ENCODE measurements at regions of chr17 and their contacts with region 1.

Region 1: GRCh38 chr17:42138749-42139492 is 15.9 kb downstream of the RAB5C start:
- DNase-seq: no peak
- H3K4me3 ChIP-seq: no peak overlapping the region
- H3K27ac ChIP-seq: no peak overlapping the region
- H3K4me1 ChIP-seq: peaks cover 0 to 5% (median 0%) of the 10 kb centered on the region in 4 experiments; a peak in 2 of 7 replicates
- H3K27me3 ChIP-seq: no peaks in the 10 kb centered on the region
- CTCF ChIP-seq: no peak
- EP300 ChIP-seq: no peak
- POLR2A ChIP-seq: no peak
- RAD21 ChIP-seq: no peak

Region 2: GRCh38 chr17:42112552-42113176 is 26.3 kb before region 1 on chr17 and contains the start of gene DHX58:
- CTCF ChIA-PET with region 1: interaction called, 97 read pairs
- POLR2A ChIA-PET with region 1: interaction called, 3 read pairs
- DNase-seq: no peak
- H3K4me3 ChIP-seq: no peak within 1 kb of the TSS
- H3K27ac ChIP-seq: no peak within 1 kb of the TSS
- H3K4me1 ChIP-seq: peaks cover 0 to 18% (median 10%) of the 10 kb centered on the region in 4 experiments; a peak in 6 of 7 replicates
- H3K27me3 ChIP-seq: no peaks in the 10 kb centered on the region
- CTCF ChIP-seq: no peak
- EP300 ChIP-seq: no peak
- POLR2A ChIP-seq: no peak
- RAD21 ChIP-seq: no peak
- total RNA-seq, gene DHX58: 4.4 and 5.6 TPM in 2 replicates

Region 3: GRCh38 chr17:42200702-42201101 is 61.8 kb after region 1 on chr17:
- CTCF ChIA-PET with region 1: no interaction called
- POLR2A ChIA-PET with region 1: no interaction called
- DNase-seq: no peak
- H3K4me3 ChIP-seq: no peak overlapping the region
- H3K27ac ChIP-seq: no peak overlapping the region
- H3K4me1 ChIP-seq: no peaks in the 10 kb centered on the region
- H3K27me3 ChIP-seq: no peaks in the 10 kb centered on the region
- CTCF ChIP-seq: no peak
- EP300 ChIP-seq: no peak
- POLR2A ChIP-seq: no peak
- RAD21 ChIP-seq: no peak

Measured in H1 (cell line).